ENCODE measurements at regions of chr22 and their contacts with region 1.

Region 1: GRCh38 chr22:37166675-37167066 is 17.0 kb upstream of the IL2RB start:
- DNase-seq: peak; percentile 92
- H3K4me3 Mint-ChIP-seq: peak overlapping the region; percentile 68
- H3K27ac Mint-ChIP-seq: peak overlapping the region; percentile 67
- H3K4me1 Mint-ChIP-seq: peaks cover 79% of the 10 kb centered on the region
- H3K27me3 Mint-ChIP-seq: no peaks in the 10 kb centered on the region

Region 2: GRCh38 chr22:36977947-36978660 is 188.6 kb before region 1 on chr22:
- CTCF ChIA-PET with region 1: interaction called, 10 read pairs
- POLR2A ChIA-PET with region 1: no interaction called
- intact Hi-C with region 1: no loop called
- DNase-seq: peak; percentile 94
- H3K4me3 Mint-ChIP-seq: peak overlapping the region; percentile 78
- H3K27ac Mint-ChIP-seq: peak overlapping the region; percentile 2
- H3K4me1 Mint-ChIP-seq: peaks cover 5% of the 10 kb centered on the region
- H3K27me3 Mint-ChIP-seq: no peaks in the 10 kb centered on the region

Region 3: GRCh38 chr22:37088108-37088605 is 78.5 kb before region 1 on chr22:
- CTCF ChIA-PET with region 1: interaction called, 4 read pairs
- POLR2A ChIA-PET with region 1: interaction called, 17 read pairs
- intact Hi-C with region 1: no loop called
- DNase-seq: peak; percentile 85
- H3K4me3 Mint-ChIP-seq: peak overlapping the region; percentile 74
- H3K27ac Mint-ChIP-seq: peak overlapping the region; percentile 83
- H3K4me1 Mint-ChIP-seq: peaks cover 37% of the 10 kb centered on the region
- H3K27me3 Mint-ChIP-seq: peaks cover 2% of the 10 kb centered on the region

Region 4: GRCh38 chr22:37148742-37149665 is 17.7 kb before region 1 on chr22:
- CTCF ChIA-PET with region 1: interaction called, 183 read pairs
- POLR2A ChIA-PET with region 1: interaction called, 240 read pairs
- intact Hi-C with region 1: loop called (anchors 1 kb)
- DNase-seq: no peak
- H3K4me3 Mint-ChIP-seq: peak overlapping the region; percentile 95
- H3K27ac Mint-ChIP-seq: peak overlapping the region; percentile 95
- H3K4me1 Mint-ChIP-seq: peaks cover 56% of the 10 kb centered on the region
- H3K27me3 Mint-ChIP-seq: no peaks in the 10 kb centered on the region

Region 5: DNA sequence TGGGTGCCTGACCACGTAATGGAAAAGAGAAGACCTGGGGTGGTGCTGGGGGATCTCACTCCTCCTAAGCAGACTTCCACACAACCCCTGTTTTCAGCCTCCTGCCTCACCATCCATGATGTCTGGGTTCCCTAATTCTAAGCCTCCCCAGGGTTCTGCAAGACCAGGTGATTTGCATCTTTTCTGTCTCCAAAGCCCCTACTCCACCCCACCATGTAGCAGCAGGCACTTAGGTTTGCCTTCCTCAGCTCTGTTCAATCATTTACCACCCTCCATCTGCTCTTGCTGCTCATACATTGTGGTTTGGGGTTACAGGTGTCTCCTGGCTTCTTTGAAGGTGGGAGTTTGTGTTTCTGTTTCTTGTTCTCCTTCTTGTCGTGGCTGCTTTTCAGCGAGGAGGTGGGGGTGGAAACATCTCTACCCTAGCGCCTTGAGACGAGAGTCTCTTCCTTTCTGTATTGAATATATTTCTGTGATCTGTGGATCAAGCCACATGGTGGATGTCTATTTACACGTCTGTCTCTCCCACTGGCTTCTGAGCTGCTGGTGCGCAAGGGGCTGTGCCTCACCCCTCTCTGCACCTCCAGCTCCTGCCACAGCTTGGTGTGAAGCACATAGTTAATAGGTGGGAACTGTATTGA is 52.2 kb after region 1 on chr22:
- CTCF ChIA-PET with region 1: interaction called, 3 read pairs
- POLR2A ChIA-PET with region 1: interaction called, 6 read pairs
- intact Hi-C with region 1: loop called (anchors 2 kb)
- DNase-seq: peak; percentile 85
- H3K4me3 Mint-ChIP-seq: peak overlapping the region; percentile 76
- H3K27ac Mint-ChIP-seq: peak overlapping the region; percentile 95
- H3K4me1 Mint-ChIP-seq: peaks cover 76% of the 10 kb centered on the region
- H3K27me3 Mint-ChIP-seq: no peaks in the 10 kb centered on the region

Region 6: GRCh38 chr22:37244114-37244921 is 77.6 kb after region 1 on chr22 and contains the start of gene RAC2:
- CTCF ChIA-PET with region 1: interaction called, 3 read pairs
- POLR2A ChIA-PET with region 1: interaction called, 6 read pairs
- intact Hi-C with region 1: loop called (anchors 1 kb)
- DNase-seq: peak; percentile 96
- H3K4me3 Mint-ChIP-seq: peak within 1 kb of the TSS; percentile 99
- H3K27ac Mint-ChIP-seq: peak within 1 kb of the TSS; percentile 99
- H3K4me1 Mint-ChIP-seq: peaks cover 42% of the 10 kb centered on the region
- H3K27me3 Mint-ChIP-seq: no peaks in the 10 kb centered on the region
- total RNA-seq, gene RAC2: 714 to 727 TPM

Region 7: DNA sequence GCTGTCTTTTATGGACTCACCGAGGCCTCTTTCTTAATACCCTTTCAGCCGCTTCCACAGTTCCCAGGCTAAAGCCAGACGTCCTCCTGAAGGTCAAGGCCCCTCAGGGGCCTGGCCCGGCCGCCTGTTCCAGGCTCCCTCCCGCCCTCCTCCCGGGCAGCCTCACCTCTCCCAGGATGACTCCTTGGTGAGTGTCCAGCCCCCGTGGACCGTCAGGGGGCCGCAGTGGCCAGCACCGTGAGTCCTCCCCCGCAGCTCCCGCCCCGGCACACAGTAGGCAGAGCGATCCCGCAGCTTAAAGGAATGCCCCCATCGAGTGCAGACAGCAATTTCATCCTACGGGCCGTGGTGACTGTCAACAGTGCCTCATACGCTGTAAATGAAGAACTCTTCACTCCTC is 227.7 kb after region 1 on chr22:
- CTCF ChIA-PET with region 1: no interaction called
- POLR2A ChIA-PET with region 1: no interaction called
- intact Hi-C with region 1: no loop called
- DNase-seq: no peak
- H3K4me3 Mint-ChIP-seq: no peak overlapping the region
- H3K27ac Mint-ChIP-seq: no peak overlapping the region
- H3K4me1 Mint-ChIP-seq: no peaks in the 10 kb centered on the region
- H3K27me3 Mint-ChIP-seq: peaks cover 7% of the 10 kb centered on the region